Panc1 (cell line): ENCODE measurements at regions of chr14 and their contacts with region 1.

Region 1: GRCh38 chr14:101774006-101774795 is 12.7 kb downstream of the PPP2R5C start:
- DNase-seq: no peak
- ATAC-seq: no peak
- H3K4me3 ChIP-seq: no peak overlapping the region
- H3K27ac ChIP-seq: no peak overlapping the region
- H3K4me1 ChIP-seq: no peaks in the 10 kb centered on the region
- H3K27me3 ChIP-seq: no peaks in the 10 kb centered on the region
- CTCF ChIP-seq: no peak

Region 2: GRCh38 chr14:101889898-101890297 is 115.7 kb after region 1 on chr14:
- CTCF ChIA-PET with region 1: no interaction called
- POLR2A ChIA-PET with region 1: no interaction called
- in situ Hi-C with region 1: no loop called
- intact Hi-C with region 1: no loop called
- DNase-seq: no peak
- ATAC-seq: no peak
- H3K4me3 ChIP-seq: no peak overlapping the region
- H3K27ac ChIP-seq: no peak overlapping the region
- H3K4me1 ChIP-seq: no peaks in the 10 kb centered on the region
- H3K27me3 ChIP-seq: no peaks in the 10 kb centered on the region
- CTCF ChIP-seq: no peak

Region 3: GRCh38 chr14:101932673-101933072 is 158.5 kb after region 1 on chr14:
- CTCF ChIA-PET with region 1: no interaction called
- POLR2A ChIA-PET with region 1: no interaction called
- in situ Hi-C with region 1: no loop called
- intact Hi-C with region 1: loop called (anchors 10 kb)
- DNase-seq: no peak
- ATAC-seq: no peak
- H3K4me3 ChIP-seq: no peak overlapping the region
- H3K27ac ChIP-seq: no peak overlapping the region
- H3K4me1 ChIP-seq: no peaks in the 10 kb centered on the region
- H3K27me3 ChIP-seq: no peaks in the 10 kb centered on the region
- CTCF ChIP-seq: no peak

Region 4: DNA sequence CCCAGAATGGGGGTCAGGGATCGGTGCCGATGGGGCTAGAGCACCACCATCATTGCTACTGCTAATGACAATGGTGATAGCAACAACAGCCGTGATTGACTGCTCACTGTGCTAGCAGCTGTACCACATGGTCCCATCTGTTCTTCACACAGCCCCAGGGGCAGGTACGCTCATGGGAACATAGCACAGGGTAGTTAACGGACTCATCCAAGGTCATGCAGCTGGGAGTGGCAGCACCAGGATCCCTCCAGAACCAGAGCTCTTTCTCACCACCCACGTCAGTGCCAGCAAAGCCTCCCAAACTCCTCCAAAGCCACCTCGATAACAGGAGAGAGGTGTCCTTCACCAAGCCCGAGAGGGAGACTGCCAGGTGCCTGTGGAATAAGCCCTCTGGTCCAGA is 178.9 kb after region 1 on chr14:
- CTCF ChIA-PET with region 1: interaction called, 12 read pairs
- POLR2A ChIA-PET with region 1: no interaction called
- in situ Hi-C with region 1: no loop called
- intact Hi-C with region 1: no loop called
- DNase-seq: no peak
- ATAC-seq: no peak; the same call in 1 of the 2 replicates
- H3K4me3 ChIP-seq: no peak overlapping the region
- H3K27ac ChIP-seq: no peak overlapping the region
- H3K4me1 ChIP-seq: peaks cover 3% of the 10 kb centered on the region
- H3K27me3 ChIP-seq: no peaks in the 10 kb centered on the region
- CTCF ChIP-seq: no peak